Dorsolateral prefrontal cortex (tissue), 120 donors: ENCODE measurements at regions of chr11 and their contacts with region 1.

Region 1: GRCh38 chr11:47143322-47143721 is 33.4 kb downstream of the ARFGAP2 start:
- DNase-seq: no peak
- H3K4me3 ChIP-seq: no peak overlapping the region
- H3K27ac ChIP-seq: peak overlapping the region in 24 of 59 donors; percentile 3 to 72 (median 36)
- H3K27me3 ChIP-seq: no peaks in the 10 kb centered on the region
- CTCF ChIP-seq: no peak

Region 2: GRCh38 chr11:47004595-47005033 is 138.7 kb before region 1 on chr11:
- intact Hi-C with region 1: loop called in 1 of 2 experiments (anchors 10 kb)
- DNase-seq: peak; percentile 30 to 76 (median 66)
- H3K4me3 ChIP-seq: peak overlapping the region in 2 of 59 donors; percentile 19 to 20
- H3K27ac ChIP-seq: peak overlapping the region; percentile 8 to 93 (median 78)
- H3K27me3 ChIP-seq: no peaks in the 10 kb centered on the region
- CTCF ChIP-seq: peak in 13 of 56 donors; percentile 9 to 36 (median 19)